ENCODE measurements at regions of chr2 and their contacts with region 1.

Region 1: DNA sequence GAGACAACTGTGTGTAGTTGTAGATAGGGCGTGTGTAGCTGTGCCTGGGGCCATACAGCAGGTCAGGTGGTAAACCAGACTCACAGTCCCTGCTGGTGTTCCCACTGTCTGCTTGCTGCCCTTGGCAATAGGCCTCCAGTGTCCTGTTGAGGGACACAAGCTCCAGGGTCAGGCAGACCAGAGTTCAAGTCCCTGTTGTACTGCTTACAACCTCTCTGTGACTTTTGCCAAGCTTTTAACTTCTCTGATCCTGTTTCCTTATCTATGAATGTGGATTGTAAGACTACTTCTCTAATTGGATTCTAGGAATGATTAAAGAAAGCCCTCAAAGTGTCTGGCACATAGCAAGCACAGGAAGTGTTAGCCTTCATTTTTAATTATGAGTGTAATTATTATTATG is 68.6 kb downstream of the MERTK start:
- DNase-seq: no peak
- ATAC-seq: no peak
- H3K4me3 ChIP-seq: no peak overlapping the region
- H3K27ac ChIP-seq: no peak overlapping the region
- H3K4me1 ChIP-seq: no peaks in the 10 kb centered on the region
- H3K27me3 ChIP-seq: no peaks in the 10 kb centered on the region
- CTCF ChIP-seq: no peak

Region 2: DNA sequence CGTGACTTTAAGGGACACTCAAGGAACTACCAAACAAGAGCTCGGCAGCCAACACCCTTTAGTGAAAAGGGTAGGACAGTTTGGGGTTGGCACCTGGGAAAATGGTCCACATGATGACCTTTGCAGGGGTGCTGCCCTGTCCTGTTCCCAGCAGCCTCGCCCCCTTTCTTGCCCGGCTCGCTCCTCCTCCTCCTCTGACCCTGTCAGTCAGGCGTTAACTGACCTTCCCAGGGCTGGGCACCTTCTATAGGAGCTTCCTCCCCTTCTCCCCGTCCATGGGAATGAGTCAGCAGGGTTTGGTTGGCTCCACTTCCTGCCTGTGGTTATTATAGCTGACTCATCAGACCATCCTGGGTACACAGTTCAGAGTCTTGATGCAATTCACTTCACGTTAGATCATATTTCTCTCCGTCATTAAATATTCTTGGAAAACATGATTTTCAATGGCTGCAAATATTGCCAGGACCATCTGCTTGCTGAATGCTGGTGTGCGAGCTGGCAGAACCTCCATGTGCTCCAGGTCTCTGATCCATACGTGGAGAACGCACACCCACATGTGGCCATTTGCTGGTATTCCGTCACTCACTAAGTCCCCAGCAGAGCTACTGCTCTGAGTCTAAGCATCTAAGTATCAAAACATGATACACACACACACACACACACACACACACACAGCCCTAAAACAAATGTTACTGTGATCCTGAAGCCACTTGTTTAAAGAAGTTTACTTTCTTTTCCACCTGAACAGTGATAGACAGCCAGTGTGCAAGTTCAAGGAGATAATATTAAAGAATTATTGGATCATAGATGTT is 268.1 kb before region 1 on chr2:
- intact Hi-C with region 1: no loop called
- DNase-seq: peak in 4 of 6 donors; percentile 23 to 59 (median 32)
- ATAC-seq: peak; percentile 61 to 92 (median 85)
- H3K4me3 ChIP-seq: no peak overlapping the region
- H3K27ac ChIP-seq: no peak overlapping the region
- H3K4me1 ChIP-seq: no peaks in the 10 kb centered on the region
- H3K27me3 ChIP-seq: no peaks in the 10 kb centered on the region
- CTCF ChIP-seq: no peak

Region 3: DNA sequence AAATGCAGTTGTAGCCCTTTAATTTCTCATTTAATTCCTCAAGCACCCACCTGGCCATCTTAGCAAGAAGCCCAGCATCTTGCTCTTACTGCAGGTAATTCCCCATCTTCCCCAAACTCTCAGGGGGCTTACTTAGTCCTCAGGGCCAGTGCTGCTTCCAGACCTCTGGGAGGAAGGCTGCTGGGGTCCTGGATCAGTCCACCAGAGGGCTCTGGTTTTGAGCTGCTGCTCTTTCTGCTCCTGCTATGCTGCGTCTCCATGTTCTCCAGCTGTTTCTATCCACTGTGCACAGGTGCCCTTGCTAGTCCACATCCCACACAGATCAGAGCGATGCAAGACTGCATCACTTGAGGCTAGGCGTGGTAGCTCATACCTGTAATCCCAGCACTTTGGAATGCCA is 53.5 kb after region 1 on chr2:
- intact Hi-C with region 1: loop called in 1 of 3 experiments (anchors 10 kb)
- DNase-seq: no peak
- ATAC-seq: no peak
- H3K4me3 ChIP-seq: no peak overlapping the region
- H3K27ac ChIP-seq: no peak overlapping the region
- H3K4me1 ChIP-seq: no peaks in the 10 kb centered on the region
- H3K27me3 ChIP-seq: no peaks in the 10 kb centered on the region
- CTCF ChIP-seq: no peak